Activated T-helper 2 cell treated with anti-CD3 and anti-CD28 coated beads, Interferon-gamma antibody, Interleukin-2, Interleukin-4, amounts not matched to agents 10 μg/mL and 5 μg/mL and 100 μg/mL, durations not matched to agents 14 hours and 24 hours and 36 hours (primary cell): ENCODE measurements at regions of chr19 and their contacts with region 1.

Region 1: GRCh38 chr19:52028027-52028779 is at the start of gene ZNF614:
- DNase-seq: peak; percentile 82
- H3K4me3 Mint-ChIP-seq: peak within 1 kb of the TSS; percentile 92
- H3K27ac Mint-ChIP-seq: peak within 1 kb of the TSS; percentile 93
- H3K4me1 Mint-ChIP-seq: peaks cover 11% of the 10 kb centered on the region
- H3K27me3 Mint-ChIP-seq: no peaks in the 10 kb centered on the region
- total RNA-seq, gene ZNF614: 9.2 and 9.6 TPM in 2 replicates

Region 2: GRCh38 chr19:51796195-51796679 is 232.0 kb before region 1 on chr19:
- intact Hi-C with region 1: no loop called
- DNase-seq: no peak
- H3K4me3 Mint-ChIP-seq: no peak overlapping the region
- H3K27ac Mint-ChIP-seq: no peak overlapping the region
- H3K4me1 Mint-ChIP-seq: no peaks in the 10 kb centered on the region
- H3K27me3 Mint-ChIP-seq: no peaks in the 10 kb centered on the region

Region 3: DNA sequence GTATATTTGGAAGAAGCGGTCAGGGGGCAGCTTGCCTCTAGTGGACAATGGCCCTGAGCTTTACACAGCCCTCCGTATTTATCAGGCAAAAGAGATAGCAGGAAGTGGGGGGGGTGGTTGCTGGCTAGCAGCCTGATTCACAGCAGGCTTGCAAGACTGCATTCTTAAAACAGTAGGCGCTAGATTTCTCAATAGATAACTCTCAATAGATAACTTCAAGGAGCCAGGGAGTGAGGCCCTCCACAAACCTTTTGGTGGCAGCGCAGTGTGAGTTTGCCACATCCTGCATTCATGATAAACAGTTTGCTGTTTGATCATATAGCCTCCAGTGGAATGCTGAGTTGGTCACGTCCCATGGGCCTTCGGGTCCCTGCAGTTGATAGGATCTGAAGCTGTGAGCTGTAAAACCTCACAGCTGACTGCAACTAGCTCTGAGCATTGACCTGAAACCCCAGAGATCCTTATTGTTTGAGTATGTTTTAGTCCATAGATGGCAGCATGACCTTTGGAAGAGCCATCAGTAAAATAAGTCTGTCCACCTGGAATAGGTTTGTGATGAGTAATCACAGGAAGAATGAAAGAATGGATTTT is 221.0 kb before region 1 on chr19:
- intact Hi-C with region 1: no loop called
- DNase-seq: no peak
- H3K4me3 Mint-ChIP-seq: no peak overlapping the region
- H3K27ac Mint-ChIP-seq: no peak overlapping the region
- H3K4me1 Mint-ChIP-seq: no peaks in the 10 kb centered on the region
- H3K27me3 Mint-ChIP-seq: no peaks in the 10 kb centered on the region

Region 4: DNA sequence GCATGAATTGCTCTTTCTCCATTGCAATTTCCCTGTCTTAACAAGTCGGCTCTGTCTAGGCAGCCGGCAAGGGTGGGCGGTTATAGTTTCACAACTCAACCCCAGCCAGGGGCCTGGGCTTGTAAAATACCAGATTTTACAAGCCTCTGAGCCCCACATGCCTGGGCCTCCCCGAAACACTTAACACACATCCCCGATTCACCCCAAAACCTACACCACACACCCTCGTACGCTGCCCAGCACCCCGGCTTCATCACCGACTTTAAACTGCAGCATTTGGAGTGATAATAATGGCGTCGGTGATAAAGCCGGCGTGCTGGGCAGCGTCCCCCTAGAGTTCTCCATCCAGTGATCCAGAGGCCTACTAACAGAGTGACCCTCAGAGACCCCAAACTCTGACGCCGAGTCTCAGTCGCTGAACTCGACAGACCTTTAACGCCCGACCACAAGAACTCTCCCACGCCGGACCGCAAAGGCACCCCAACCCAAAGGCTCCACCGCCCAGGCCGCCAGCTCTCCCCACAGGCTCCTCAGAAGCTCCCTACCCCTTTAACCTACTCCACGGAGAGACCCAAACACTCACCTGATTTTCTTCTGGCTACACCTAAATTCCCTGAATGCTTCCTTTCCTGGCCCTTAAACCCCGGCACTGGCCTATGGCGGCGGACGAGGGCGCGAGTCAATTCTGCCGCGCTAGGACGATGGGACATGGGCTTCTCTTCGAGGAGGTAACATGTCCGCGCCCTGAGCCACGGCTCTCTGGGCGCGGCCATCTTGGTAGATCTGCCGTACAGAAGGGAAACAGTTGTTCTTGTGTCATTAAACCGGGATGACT is 123.7 kb before region 1 on chr19 and contains the start of gene ZNF649:
- intact Hi-C with region 1: loop called (anchors 10 kb)
- DNase-seq: peak; percentile 72
- H3K4me3 Mint-ChIP-seq: peak within 1 kb of the TSS; percentile 99
- H3K27ac Mint-ChIP-seq: peak within 1 kb of the TSS; percentile 98
- H3K4me1 Mint-ChIP-seq: peaks cover 13% of the 10 kb centered on the region
- H3K27me3 Mint-ChIP-seq: peaks cover 4% of the 10 kb centered on the region
- total RNA-seq, gene ZNF649: 11.8 and 12.1 TPM in 2 replicates

Region 5: DNA sequence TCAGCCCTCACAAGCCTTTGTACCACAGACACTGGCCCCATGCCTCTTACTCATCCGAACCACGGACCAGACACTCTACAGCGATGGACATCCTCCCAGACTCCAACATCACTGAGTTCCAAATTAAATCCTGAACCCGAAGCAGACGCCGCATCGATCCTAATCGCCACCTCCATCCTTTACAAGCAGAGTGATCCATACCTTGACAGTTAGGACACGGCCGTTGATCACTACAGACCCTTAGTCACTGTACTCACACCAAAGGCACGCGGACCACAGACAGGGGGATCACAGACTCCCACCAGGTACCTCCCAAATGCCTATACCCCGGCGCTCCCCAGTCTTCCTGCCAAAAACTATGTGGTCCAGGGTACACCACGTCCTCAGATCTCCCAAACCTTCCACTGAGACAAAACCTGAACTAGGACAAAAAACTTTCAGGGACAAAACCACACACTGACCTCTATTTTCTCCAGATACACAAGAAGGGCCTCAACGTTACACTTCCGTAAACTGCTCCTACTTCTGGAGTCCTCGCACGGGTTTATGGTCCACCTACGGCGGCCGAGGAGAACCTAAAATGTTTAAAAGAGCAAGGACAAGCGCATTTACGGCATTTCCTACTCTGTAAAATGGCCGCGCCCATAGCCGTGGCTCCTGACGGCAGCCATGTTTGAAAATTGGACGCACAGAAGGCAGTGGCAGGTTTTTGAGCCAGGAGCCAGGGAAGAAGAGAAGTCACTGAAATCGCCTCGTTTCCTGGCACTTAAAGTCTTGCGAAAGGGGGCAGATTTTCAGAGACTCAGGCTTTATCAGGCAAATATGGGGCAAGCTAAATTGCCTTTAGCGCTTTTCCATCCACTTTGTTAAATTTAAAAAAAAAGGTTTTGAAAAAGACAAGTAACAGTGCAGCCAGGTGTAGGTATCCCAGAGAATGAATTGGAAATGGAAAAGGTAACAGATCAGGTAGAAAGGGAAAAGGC is 41.6 kb before region 1 on chr19 and contains the start of gene ZNF350:
- intact Hi-C with region 1: loop called (anchors 1 kb)
- DNase-seq: peak; percentile 84
- H3K4me3 Mint-ChIP-seq: peak within 1 kb of the TSS; percentile 95
- H3K27ac Mint-ChIP-seq: peak within 1 kb of the TSS; percentile 89
- H3K4me1 Mint-ChIP-seq: peaks cover 8% of the 10 kb centered on the region
- H3K27me3 Mint-ChIP-seq: no peaks in the 10 kb centered on the region
- total RNA-seq, gene ZNF350: 9.1 and 9.2 TPM in 2 replicates

Region 6: DNA sequence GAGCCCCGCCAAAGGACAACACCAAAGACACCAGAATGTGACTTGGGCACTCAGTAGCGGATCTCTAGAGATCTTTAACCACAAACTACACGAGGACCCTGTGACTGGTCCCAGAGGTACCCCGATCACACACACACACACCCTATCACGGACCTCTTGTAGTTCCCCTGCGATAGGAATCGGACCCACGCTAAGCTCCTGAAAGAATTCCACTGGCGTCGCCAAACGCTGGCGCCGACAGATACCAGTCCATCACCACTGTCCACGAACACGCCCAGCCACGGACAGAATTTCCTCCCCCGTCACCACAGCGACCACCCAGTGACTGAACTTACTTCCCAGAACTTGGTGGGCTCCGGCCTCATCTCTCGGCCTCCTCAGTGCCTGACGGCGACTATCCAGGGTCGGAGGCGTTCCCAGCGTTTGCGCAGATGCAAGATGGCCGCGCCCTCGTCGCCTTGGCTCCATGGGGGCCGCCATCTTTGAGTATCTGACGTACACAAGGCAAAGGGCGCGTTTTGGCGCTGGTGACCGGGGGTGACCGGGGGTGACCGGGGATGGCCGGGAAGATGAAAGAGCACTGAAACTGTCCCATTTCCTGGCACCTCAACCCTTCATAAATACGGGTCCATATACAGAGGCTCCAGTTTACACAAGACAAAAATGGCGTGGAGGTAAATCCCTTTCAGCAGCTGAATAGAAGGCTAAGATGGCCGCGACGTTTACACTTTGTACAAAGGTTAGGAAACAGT is 20.2 kb before region 1 on chr19 and contains the start of gene ZNF615:
- intact Hi-C with region 1: loop called (anchors 1 kb)
- DNase-seq: peak; percentile 80
- H3K4me3 Mint-ChIP-seq: peak within 1 kb of the TSS; percentile 93
- H3K27ac Mint-ChIP-seq: peak within 1 kb of the TSS; percentile 96
- H3K4me1 Mint-ChIP-seq: peaks cover 10% of the 10 kb centered on the region
- H3K27me3 Mint-ChIP-seq: no peaks in the 10 kb centered on the region
- total RNA-seq, gene ZNF615: 6.3 and 6.7 TPM in 2 replicates

Region 7: DNA sequence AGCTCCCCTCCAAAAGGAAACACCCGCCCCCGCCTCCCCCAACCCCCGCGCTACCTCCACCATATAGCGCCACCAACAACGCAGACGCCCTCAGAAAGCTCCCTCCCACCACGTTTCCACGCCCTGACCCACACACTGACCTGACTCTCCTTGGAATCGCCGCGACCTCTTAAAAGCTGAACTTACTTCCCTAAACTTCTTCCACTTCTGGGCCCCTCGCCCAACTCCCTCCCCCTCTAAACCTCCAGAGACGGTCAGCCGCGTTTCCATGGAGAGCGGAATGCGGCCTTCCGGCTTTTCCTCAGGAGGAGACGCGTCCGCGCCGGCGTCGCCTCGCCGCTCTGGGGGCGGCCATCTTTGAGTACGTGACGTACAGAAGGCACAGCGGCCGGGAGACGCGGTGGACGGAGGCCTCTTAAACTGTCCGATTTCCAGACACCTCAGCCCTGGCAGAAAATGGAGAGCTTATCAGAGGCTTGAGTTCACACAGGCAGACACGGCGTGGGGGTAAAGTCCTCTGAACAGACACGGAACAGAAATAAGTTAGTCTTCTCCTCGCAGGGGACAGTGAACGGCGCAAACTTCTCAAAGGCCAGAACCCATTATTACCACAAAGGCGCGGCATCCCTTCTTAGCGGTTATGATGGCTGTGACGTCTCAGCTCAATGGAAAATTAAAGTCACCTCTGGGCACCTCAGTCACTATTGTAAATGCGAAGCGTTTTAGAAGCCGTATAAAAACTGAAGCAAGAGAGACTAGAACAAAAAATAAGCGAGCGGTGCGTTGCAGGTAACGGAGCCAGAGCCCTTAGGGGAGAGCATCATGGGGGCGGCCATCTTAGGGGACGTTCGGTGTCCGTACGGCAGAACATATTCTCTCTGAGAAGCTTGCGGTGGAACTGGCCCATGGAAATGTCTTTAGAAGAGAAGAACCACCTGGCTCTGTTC is 20.6 kb after region 1 on chr19 and contains the start of gene ZNF432:
- intact Hi-C with region 1: loop called (anchors 1 kb)
- DNase-seq: peak; percentile 78
- H3K4me3 Mint-ChIP-seq: peak within 1 kb of the TSS; percentile 96
- H3K27ac Mint-ChIP-seq: peak within 1 kb of the TSS; percentile 99
- H3K4me1 Mint-ChIP-seq: peaks cover 9% of the 10 kb centered on the region
- H3K27me3 Mint-ChIP-seq: no peaks in the 10 kb centered on the region
- total RNA-seq, gene ZNF432: 13.3 and 15.5 TPM in 2 replicates

Region 8: DNA sequence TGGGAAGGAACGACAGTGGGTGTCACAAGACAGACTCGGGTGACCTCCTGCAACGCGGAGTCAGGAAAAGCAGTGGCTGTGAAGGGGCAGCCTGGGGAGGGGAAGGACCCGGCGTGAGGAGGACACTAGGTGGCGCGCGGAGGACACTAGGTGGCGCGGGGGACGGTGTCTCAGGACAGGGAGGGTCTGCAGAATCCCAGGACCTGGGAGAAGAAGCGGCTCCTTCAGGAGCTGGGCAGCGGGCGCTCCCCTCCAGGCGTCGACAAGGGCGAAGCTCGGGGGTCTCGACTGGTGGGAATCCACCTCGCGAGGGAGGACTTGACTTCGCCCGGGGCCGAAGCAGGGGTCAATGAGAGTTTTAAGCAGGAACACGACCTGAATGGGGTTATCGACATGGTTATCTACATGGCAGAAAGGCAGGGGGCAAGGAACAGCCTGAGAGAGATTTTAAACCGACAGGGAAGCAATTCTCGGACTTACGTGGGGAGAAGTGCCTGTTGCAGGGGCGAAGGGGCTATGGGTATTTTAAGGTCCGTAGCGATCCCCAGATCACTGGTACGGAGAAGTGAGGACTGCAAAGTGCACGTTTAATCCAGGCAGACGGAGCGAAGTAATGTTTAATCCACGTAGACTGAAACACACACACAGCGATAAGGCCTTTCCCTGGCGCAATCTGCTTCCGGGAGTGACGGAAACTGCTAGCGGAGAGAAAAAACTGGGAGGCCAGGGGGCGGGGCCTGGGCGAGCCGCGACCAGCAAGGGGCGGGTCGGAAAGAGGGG is 111.2 kb after region 1 on chr19 and contains the start of gene ZNF616:
- intact Hi-C with region 1: loop called (anchors 5 kb)
- DNase-seq: peak; percentile 93
- H3K4me3 Mint-ChIP-seq: peak within 1 kb of the TSS; percentile 93
- H3K27ac Mint-ChIP-seq: peak within 1 kb of the TSS; percentile 91
- H3K4me1 Mint-ChIP-seq: peaks cover 16% of the 10 kb centered on the region
- H3K27me3 Mint-ChIP-seq: no peaks in the 10 kb centered on the region
- total RNA-seq, gene ZNF616: 6.6 and 8.5 TPM in 2 replicates

Region 9: GRCh38 chr19:52269338-52270261 is 241.4 kb after region 1 on chr19 and contains the start of gene ZNF766:
- intact Hi-C with region 1: no loop called
- DNase-seq: peak; percentile 95
- H3K4me3 Mint-ChIP-seq: peak within 1 kb of the TSS; percentile 98
- H3K27ac Mint-ChIP-seq: peak within 1 kb of the TSS; percentile 95
- H3K4me1 Mint-ChIP-seq: peaks cover 11% of the 10 kb centered on the region
- H3K27me3 Mint-ChIP-seq: no peaks in the 10 kb centered on the region
- total RNA-seq, gene ZNF766: 15.9 and 18.2 TPM in 2 replicates